ENCODE measurements at regions of chr3 and their contacts with region 1.

Region 1: DNA sequence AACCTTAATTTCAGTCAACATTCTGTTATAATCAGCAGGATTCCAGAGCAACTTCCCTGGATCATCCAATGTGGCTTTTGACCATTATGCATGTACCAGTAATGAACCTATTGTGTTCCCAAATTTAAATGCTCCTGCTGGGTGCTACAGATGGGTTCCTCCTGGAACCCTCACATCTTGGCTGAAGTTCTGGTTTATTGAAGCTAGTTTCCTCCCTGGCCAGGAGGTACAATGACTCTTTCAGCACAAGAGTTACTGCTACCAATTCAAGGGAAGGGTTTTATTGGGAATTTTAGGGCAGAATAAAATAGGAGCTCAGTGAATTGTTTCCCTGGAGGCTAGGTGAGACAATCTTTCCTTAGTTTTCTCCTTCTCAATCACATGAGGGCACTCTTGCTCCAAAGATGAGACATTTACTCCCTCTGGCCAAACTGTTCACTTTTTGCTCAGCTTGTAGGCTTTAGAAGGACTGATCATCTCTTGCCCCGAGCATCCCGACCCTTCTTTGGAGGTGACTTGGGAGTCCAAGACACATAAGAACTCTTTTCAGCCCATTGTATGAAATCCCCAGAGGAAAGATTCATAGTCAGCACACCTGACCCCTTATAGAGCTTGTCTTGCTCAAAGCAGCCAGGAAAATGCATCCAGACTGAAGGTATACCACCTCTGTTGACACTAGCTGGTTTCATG is 8.8 kb upstream of the NPHP3 start:
- DNase-seq: peak; percentile 60
- H3K4me3 Mint-ChIP-seq: no peak overlapping the region
- H3K27ac Mint-ChIP-seq: no peak overlapping the region
- H3K4me1 Mint-ChIP-seq: no peaks in the 10 kb centered on the region
- H3K27me3 Mint-ChIP-seq: peaks cover 69% of the 10 kb centered on the region
- CTCF ChIP-seq: peak; percentile 55

Region 2: GRCh38 chr3:132519914-132520313 is 211.1 kb before region 1 on chr3:
- CTCF ChIA-PET with region 1: no interaction called
- POLR2A ChIA-PET with region 1: no interaction called
- intact Hi-C with region 1: no loop called
- DNase-seq: no peak
- H3K4me3 Mint-ChIP-seq: no peak overlapping the region
- H3K27ac Mint-ChIP-seq: no peak overlapping the region
- H3K4me1 Mint-ChIP-seq: no peaks in the 10 kb centered on the region
- H3K27me3 Mint-ChIP-seq: no peaks in the 10 kb centered on the region
- CTCF ChIP-seq: no peak

Region 3: GRCh38 chr3:132756108-132756650 is 25.1 kb after region 1 on chr3:
- CTCF ChIA-PET with region 1: interaction called, 11 read pairs
- POLR2A ChIA-PET with region 1: no interaction called
- intact Hi-C with region 1: no loop called
- DNase-seq: no peak
- H3K4me3 Mint-ChIP-seq: no peak overlapping the region
- H3K27ac Mint-ChIP-seq: no peak overlapping the region
- H3K4me1 Mint-ChIP-seq: no peaks in the 10 kb centered on the region
- H3K27me3 Mint-ChIP-seq: peaks cover 19% of the 10 kb centered on the region
- CTCF ChIP-seq: no peak

Region 4: GRCh38 chr3:133377396-133377795 is 646.4 kb after region 1 on chr3:
- CTCF ChIA-PET with region 1: interaction called, 69 read pairs
- POLR2A ChIA-PET with region 1: no interaction called
- intact Hi-C with region 1: loop called (anchors 1 kb)
- DNase-seq: peak; percentile 64
- H3K4me3 Mint-ChIP-seq: no peak overlapping the region
- H3K27ac Mint-ChIP-seq: no peak overlapping the region
- H3K4me1 Mint-ChIP-seq: no peaks in the 10 kb centered on the region
- H3K27me3 Mint-ChIP-seq: peaks cover 17% of the 10 kb centered on the region
- CTCF ChIP-seq: peak; percentile 31

Region 5: GRCh38 chr3:133393691-133394474 is 662.8 kb after region 1 on chr3:
- CTCF ChIA-PET with region 1: interaction called, 15 read pairs
- POLR2A ChIA-PET with region 1: no interaction called
- intact Hi-C with region 1: no loop called
- DNase-seq: peak; percentile 57
- H3K4me3 Mint-ChIP-seq: no peak overlapping the region
- H3K27ac Mint-ChIP-seq: no peak overlapping the region
- H3K4me1 Mint-ChIP-seq: peaks cover 6% of the 10 kb centered on the region
- H3K27me3 Mint-ChIP-seq: peaks cover 28% of the 10 kb centered on the region
- CTCF ChIP-seq: no peak

Region 6: DNA sequence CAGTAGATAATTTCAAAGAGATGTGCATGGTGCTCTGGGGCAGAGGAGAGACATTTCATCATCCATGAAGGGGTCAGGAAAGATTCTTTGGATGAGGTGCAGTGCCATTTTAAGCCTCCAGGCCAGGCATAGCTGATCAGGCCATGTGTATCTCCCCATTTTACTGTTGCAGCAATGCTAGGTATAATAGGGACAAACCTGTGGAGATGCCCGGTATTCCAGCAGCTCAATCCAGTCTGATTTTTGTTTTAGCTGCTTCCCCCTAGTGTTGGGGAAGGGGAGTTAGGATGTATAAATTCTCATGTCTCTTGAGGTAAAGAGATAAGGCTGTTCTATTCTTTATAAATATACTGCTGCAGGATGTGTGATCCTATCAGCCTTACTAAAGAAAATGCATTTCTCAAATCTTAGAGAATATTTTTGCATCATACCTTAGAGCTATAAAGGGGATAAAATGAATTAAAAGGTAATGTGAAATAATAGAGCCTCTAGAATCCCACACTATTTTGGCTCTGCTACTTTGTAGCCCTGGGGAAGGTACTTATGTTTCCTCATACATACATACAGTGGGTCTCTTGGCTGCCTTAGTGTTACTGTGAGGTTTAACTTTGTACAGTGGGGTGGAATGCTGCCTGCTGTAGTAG is 847.6 kb after region 1 on chr3:
- CTCF ChIA-PET with region 1: interaction called, 23 read pairs
- POLR2A ChIA-PET with region 1: interaction called, 4 read pairs
- intact Hi-C with region 1: loop called (anchors 5 kb)
- DNase-seq: peak; percentile 68
- H3K4me3 Mint-ChIP-seq: peak overlapping the region; percentile 19
- H3K27ac Mint-ChIP-seq: no peak overlapping the region
- H3K4me1 Mint-ChIP-seq: peaks cover 15% of the 10 kb centered on the region
- H3K27me3 Mint-ChIP-seq: no peaks in the 10 kb centered on the region
- CTCF ChIP-seq: peak; percentile 63